Left lung (tissue), 14 donors: ENCODE measurements at regions of chr22 and their contacts with region 1.

Region 1: GRCh38 chr22:50276143-50276542 is 6.0 kb upstream of the MAPK11 start:
- DNase-seq: peak in 3 of 4 donors; percentile 44 to 91 (median 77)
- ATAC-seq: peak; percentile 88
- H3K4me3 ChIP-seq: no peak overlapping the region
- H3K27ac ChIP-seq: no peak overlapping the region
- H3K4me1 ChIP-seq: peaks cover 11% of the 10 kb centered on the region in 2 donors
- H3K27me3 ChIP-seq: peaks cover 0 to 17% of the 10 kb centered on the region in 2 donors
- CTCF ChIP-seq: peak; percentile 59 to 70

Region 2: DNA sequence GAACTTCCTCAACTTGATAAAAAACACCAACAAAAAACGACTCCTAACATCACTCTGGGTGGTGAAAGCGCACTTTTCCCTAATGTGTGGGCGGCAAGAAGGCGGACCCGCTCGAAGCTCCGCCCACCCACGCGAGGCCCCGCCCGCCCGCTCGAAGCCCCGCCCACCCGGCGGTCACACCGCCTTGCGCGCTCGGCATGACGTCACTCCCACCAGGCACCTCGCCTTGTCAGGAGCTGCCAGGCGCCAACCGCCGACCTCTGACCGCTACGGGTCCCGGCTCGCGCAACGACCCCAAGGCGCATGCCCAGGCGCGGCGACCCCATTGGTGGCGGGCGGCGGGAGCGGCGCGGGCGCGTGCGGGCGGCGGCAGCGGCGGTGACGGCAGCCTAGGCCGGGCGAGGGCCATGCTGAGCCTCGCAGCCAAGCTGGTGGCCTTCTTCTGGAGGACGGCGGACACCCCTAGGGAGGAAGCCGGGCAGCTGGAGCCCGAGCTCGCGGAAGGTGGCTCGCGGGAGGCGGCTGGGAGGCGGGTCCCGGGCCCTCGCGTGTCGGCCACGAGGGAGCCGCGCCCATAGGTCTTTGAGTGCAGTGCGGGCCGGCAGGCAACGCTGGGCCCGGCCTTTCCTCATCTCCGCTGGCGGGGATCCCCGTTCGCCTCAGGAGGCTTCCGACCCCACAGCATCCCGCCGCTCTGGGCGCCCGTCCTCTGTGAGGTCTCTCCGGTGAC is 186.3 kb before region 1 on chr22 and contains the start of gene MOV10L1:
- intact Hi-C with region 1: no loop called
- DNase-seq: peak in 2 of 4 donors; percentile 63 to 81
- ATAC-seq: peak; percentile 19
- H3K4me3 ChIP-seq: no peak within 1 kb of the TSS
- H3K27ac ChIP-seq: no peak within 1 kb of the TSS
- H3K4me1 ChIP-seq: peaks cover 2 to 6% of the 10 kb centered on the region in 2 donors
- H3K27me3 ChIP-seq: peaks cover 0 to 39% of the 10 kb centered on the region in 2 donors
- CTCF ChIP-seq: no peak
- polyA plus RNA-seq, gene MOV10L1: 1.7 to 4.7 (median 2.7) TPM

Region 3: GRCh38 chr22:50326959-50327710 is 51.0 kb after region 1 on chr22 and contains the start of gene DENND6B:
- intact Hi-C with region 1: loop called (anchors 10 kb)
- DNase-seq: peak; percentile 79 to 97 (median 88)
- ATAC-seq: peak; percentile 97
- H3K4me3 ChIP-seq: peak within 1 kb of the TSS; percentile 64 to 79
- H3K27ac ChIP-seq: peak within 1 kb of the TSS; percentile 93 to 95
- H3K4me1 ChIP-seq: peaks cover 5 to 28% of the 10 kb centered on the region in 2 donors
- H3K27me3 ChIP-seq: no peaks in the 10 kb centered on the region
- CTCF ChIP-seq: peak; percentile 29 to 71
- polyA plus RNA-seq, gene DENND6B: 9.0 to 18.8 (median 14.0) TPM

Region 4: GRCh38 chr22:50417411-50418210 is 141.5 kb after region 1 on chr22:
- intact Hi-C with region 1: no loop called
- DNase-seq: peak in 1 of 4 donors; percentile 31
- ATAC-seq: no peak
- H3K4me3 ChIP-seq: no peak overlapping the region
- H3K27ac ChIP-seq: no peak overlapping the region
- H3K4me1 ChIP-seq: no peaks in the 10 kb centered on the region
- H3K27me3 ChIP-seq: no peaks in the 10 kb centered on the region
- CTCF ChIP-seq: no peak